Activated T-helper 2 cell treated with anti-CD3 and anti-CD28 coated beads, Interferon-gamma antibody, Interleukin-2, Interleukin-4, amounts not matched to agents 10 μg/mL and 5 μg/mL and 100 μg/mL, durations not matched to agents 14 hours and 24 hours and 36 hours (primary cell): ENCODE measurements at regions of chr13 and their contacts with region 1.

Region 1: GRCh38 chr13:36981156-36981743 is 17.9 kb downstream of the ALG5 start:
- DNase-seq: no peak
- H3K4me3 Mint-ChIP-seq: no peak overlapping the region
- H3K27ac Mint-ChIP-seq: peak overlapping the region; percentile 15
- H3K4me1 Mint-ChIP-seq: peaks cover 3% of the 10 kb centered on the region
- H3K27me3 Mint-ChIP-seq: no peaks in the 10 kb centered on the region

Region 2: DNA sequence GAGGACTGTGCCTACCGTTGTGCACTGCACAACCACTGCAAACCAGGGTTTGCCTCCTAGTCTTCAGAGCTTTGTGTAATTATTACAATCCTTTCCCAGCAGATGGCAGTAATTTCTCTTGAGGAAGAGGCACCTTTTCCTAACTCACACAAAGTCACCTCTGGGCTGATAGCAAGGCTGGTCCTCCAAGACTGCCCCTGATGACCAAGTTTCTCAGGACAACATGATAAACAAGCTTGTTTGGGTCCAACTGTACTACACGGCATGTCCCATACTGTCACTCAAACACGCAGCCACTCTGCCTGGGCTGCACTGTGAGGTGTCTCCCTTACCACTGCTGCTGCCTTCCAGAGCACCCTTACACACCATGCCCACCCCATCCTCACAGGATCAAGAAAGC is 123.0 kb before region 1 on chr13:
- intact Hi-C with region 1: loop called (anchors 2 kb)
- DNase-seq: no peak
- H3K4me3 Mint-ChIP-seq: no peak overlapping the region
- H3K27ac Mint-ChIP-seq: no peak overlapping the region
- H3K4me1 Mint-ChIP-seq: peaks cover 15% of the 10 kb centered on the region
- H3K27me3 Mint-ChIP-seq: peaks cover 5% of the 10 kb centered on the region